HEK293 (cell line): ENCODE measurements at regions of chr4 and their contacts with region 1.

Region 1: GRCh38 chr4:147866532-147867271 is 134.8 kb downstream of the ARHGAP10 start:
- H3K4me3 ChIP-seq: no peak overlapping the region
- H3K27ac ChIP-seq: no peak overlapping the region
- H3K4me1 ChIP-seq: no peaks in the 10 kb centered on the region
- CTCF ChIP-seq: peak; percentile 76

Region 2: DNA sequence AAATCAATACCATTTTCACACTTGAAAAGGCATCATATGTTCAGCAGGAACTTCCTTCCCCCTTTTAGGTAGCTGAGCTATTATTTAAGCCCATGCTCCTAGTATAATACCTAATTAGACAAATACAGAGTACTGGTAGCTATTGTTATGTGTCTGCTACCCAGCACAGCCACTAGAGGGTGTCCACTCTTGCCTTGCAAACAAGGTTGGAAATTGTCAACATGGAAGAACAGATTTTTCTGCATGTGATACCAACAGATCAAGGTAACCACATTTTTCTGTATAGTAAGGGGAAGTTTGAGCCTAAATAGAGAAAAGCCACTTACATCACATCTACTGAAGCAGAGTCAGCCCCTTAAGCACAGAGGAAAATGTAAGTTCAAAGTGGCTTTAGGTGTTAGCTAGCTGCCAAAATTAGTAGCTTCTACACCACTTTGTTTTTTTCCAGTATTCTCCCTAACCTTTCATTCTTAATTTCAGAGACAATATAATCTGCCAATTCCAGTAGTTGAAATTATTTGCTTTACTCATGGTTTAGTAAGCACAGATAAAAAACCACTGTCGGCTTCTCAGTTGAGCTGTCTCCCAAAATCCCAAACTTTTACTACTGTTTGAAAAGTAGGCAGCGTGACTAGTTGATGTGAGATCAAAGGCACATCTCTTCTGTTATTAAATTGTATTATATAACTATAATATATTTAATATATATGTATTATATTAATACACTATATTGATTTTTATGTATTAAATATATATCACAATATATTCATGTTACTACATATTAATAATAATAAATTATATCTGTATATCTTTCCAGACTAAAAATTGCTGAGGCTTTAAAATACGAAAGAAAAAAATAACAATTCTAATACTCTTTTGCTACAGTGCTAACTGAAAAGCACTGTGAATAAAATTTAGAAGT is 347.6 kb before region 1 on chr4:
- CTCF ChIA-PET with region 1: interaction called, 21 read pairs
- POLR2A ChIA-PET with region 1: no interaction called
- H3K4me3 ChIP-seq: no peak overlapping the region
- H3K27ac ChIP-seq: no peak overlapping the region
- H3K4me1 ChIP-seq: no peaks in the 10 kb centered on the region
- CTCF ChIP-seq: peak; percentile 36; the same call in 1 of the 2 replicates

Region 3: DNA sequence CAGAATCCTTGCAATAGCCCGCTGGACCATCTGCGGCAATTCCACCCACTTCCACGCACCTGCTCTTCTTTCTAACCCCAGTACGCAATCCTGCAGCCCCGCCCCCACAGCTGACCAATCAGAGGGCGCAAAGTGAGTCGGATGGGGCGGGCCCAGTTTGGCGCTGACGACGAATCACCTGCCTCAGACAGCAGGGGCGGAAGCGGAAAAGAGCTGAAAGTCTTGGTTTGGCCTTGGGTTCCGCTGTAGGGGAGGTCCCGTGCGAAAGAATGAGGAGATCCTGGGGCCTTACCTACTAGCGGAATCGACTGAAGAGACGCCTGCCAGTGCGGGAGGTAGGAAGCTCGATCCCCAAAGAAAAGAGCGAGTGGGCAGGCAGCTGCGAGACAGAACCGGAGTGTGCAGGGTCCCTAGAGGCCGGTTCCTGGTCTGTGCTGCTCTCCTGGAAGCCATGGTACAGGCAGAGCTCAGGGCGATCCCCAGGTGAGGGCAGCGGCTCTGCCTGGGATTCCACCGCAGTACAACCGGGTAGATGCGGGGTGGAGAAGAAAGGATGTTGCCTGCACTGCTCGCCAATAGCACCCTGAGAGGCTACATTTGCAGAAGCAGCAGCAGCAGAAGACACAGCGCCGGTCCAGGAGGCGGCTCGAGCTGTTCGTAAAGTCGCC is 249.4 kb before region 1 on chr4 and contains the start of gene TMEM184C:
- CTCF ChIA-PET with region 1: interaction called, 19 read pairs
- POLR2A ChIA-PET with region 1: no interaction called
- H3K4me3 ChIP-seq: peak within 1 kb of the TSS; percentile 65
- H3K27ac ChIP-seq: peak within 1 kb of the TSS; percentile 67
- H3K4me1 ChIP-seq: peaks cover 3% of the 10 kb centered on the region; the same call in 1 of the 2 replicates
- CTCF ChIP-seq: no peak

Region 4: GRCh38 chr4:147693218-147693617 is 173.5 kb before region 1 on chr4:
- CTCF ChIA-PET with region 1: interaction called, 19 read pairs
- POLR2A ChIA-PET with region 1: no interaction called
- H3K4me3 ChIP-seq: no peak overlapping the region
- H3K27ac ChIP-seq: no peak overlapping the region
- H3K4me1 ChIP-seq: no peaks in the 10 kb centered on the region
- CTCF ChIP-seq: no peak

Region 5: DNA sequence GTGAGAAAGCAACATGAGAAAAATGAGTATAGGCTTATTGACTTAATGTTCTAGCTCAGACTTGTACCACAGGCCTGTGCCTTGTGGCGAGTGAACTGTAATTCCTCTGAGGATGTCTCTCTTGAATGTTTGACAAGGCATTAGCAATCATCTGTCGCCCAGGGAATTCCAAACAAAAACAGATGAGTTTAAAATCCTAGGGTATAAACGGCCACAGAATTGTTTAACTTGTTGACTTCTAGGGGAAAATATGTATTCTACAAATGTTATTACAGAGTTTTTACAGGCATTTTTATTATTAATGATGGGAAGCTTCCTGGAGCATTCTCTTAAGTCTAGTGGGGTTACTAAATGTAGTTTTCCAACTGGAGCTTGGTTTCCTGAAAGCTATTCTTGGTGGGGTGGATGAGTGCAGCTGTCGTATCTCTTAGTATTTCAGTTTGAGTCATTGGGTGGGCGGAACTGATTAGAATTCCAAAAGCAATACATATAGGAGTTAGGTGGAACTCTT is 94.2 kb before region 1 on chr4:
- CTCF ChIA-PET with region 1: interaction called, 10 read pairs
- POLR2A ChIA-PET with region 1: no interaction called
- H3K4me3 ChIP-seq: no peak overlapping the region
- H3K27ac ChIP-seq: peak overlapping the region; percentile 34; the same call in 1 of the 2 replicates
- H3K4me1 ChIP-seq: peaks cover 14% of the 10 kb centered on the region
- CTCF ChIP-seq: no peak

Region 6: GRCh38 chr4:147846318-147847155 is 20.2 kb before region 1 on chr4:
- CTCF ChIA-PET with region 1: interaction called, 18 read pairs
- POLR2A ChIA-PET with region 1: no interaction called
- H3K4me3 ChIP-seq: no peak overlapping the region
- H3K27ac ChIP-seq: no peak overlapping the region
- H3K4me1 ChIP-seq: peaks cover 10% of the 10 kb centered on the region; the same call in 1 of the 2 replicates
- CTCF ChIP-seq: no peak

Region 7: DNA sequence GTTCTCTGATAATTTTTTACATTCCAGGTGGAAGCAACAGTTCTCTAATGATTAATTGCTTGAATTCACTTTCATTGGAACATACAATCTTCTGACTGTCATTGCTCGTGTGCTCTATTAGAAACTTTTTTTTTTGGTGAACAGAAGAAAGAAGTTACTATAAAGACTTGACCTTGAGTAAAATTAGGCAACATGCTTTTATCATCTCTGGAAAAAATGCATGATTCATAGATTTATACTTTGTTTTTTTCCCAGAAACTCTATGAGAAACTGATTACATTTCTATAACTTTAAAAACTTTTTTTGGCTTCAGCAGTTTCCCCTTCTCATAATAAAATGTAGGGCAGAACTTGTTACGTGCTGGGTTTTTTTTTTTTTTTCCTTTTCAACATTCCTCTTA is 32.8 kb after region 1 on chr4:
- CTCF ChIA-PET with region 1: no interaction called
- POLR2A ChIA-PET with region 1: no interaction called
- H3K4me3 ChIP-seq: no peak overlapping the region
- H3K27ac ChIP-seq: no peak overlapping the region
- H3K4me1 ChIP-seq: no peaks in the 10 kb centered on the region
- CTCF ChIP-seq: no peak